ENCODE measurements at regions of chr7 and their contacts with region 1.

Region 1: DNA sequence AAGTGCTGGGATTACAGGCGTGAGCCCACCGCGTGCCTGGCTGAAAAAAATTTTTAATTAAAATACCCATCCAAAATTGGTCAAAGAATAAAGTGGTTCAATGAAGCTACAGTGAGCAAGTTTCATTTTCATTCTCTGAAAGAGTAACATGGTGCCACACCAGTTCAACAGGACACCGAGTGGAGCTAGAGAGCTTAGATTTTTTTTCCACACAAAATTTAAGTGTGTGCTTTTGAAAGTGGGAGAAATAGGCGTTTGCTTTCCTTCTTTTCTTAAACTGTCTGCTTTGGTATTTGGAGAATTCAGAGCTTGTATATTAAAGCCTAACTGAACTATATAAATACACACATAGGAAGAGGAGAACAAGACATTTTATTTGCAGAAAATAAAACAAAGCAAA is 43.4 kb downstream of the BPGM start:
- H3K4me3 ChIP-seq: no peak overlapping the region
- H3K27ac ChIP-seq: no peak overlapping the region
- H3K4me1 ChIP-seq: no peaks in the 10 kb centered on the region
- CTCF ChIP-seq: 0 out of 2 replicates have a peak, but pooled peaks have one; percentile 26

Region 2: GRCh38 chr7:134701272-134701671 is 11.3 kb after region 1 on chr7:
- CTCF ChIA-PET with region 1: interaction called, 13 read pairs
- POLR2A ChIA-PET with region 1: no interaction called
- H3K4me3 ChIP-seq: no peak overlapping the region
- H3K27ac ChIP-seq: no peak overlapping the region
- H3K4me1 ChIP-seq: no peaks in the 10 kb centered on the region
- CTCF ChIP-seq: 0 out of 2 replicates have a peak, but pooled peaks have one; percentile 14

Region 3: DNA sequence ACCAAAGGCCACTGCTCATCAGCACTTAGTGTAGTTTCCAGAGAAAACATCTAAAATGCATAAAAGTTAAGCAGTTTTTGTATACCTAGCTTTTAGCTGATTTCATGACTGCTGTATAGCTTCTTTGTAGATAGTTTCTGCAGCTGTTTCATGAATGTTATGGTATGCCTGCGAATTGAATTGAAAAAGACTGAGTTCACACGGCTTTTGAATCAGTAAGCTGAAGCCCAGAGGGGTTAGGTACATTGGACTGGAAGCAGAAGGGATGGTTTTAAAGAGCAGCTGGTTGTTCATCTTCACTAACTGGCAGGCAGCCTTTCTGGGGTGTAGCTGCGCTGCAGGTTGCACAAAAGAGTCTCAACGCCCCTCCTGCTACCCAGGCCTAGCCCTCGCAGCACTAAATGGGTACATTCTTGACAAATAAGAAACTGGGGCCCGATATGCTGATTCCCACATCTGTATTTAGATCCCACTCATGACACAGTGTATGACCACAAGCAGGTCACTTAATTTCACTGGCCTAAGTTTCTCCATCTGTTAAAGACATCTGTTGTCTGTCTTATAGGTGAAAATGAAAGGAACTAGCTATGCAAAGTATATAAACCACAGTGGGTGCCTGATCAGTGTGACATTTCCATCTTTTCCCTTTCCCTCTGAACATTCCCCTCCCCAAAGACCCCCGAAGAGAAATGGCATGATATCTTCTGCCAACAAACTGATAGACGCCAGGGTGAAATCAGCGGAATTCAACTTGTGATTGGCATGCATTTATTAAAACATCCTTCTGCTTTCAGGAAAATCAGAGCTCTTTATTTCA is 210.4 kb after region 1 on chr7:
- CTCF ChIA-PET with region 1: no interaction called
- POLR2A ChIA-PET with region 1: no interaction called
- H3K4me3 ChIP-seq: no peak overlapping the region
- H3K27ac ChIP-seq: no peak overlapping the region
- H3K4me1 ChIP-seq: no peaks in the 10 kb centered on the region
- CTCF ChIP-seq: no peak

Region 4: DNA sequence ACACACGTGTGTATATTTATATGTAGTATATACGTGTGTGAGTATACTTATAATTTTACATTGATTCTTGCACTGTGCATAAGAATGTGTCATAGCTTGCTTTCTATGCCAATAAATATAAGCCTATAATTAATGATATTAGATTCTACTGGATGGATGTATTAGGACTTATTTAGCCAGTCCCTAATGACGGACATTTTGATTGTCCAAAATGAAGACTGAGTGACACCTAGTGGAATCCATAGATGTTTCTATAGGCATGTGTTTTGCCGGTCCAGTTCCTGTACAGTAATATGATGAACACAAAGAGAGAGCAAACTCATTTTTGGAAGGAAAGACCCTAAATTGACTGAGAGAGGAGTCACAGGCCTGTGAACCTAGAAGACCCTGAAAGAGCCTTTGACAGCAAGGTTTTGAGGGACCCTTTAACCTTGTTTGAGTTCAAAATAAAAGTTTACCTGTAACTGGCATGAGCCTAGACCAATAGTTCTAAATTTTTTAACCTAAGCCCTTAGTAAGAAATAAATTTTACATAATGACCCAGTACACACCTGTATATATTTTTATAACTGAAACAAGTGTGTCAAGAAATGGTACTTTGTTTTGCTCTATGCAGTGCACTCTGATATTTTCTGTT is 253.9 kb after region 1 on chr7:
- CTCF ChIA-PET with region 1: interaction called, 36 read pairs
- POLR2A ChIA-PET with region 1: no interaction called
- H3K4me3 ChIP-seq: no peak overlapping the region
- H3K27ac ChIP-seq: no peak overlapping the region
- H3K4me1 ChIP-seq: no peaks in the 10 kb centered on the region
- CTCF ChIP-seq: no peak

Region 5: DNA sequence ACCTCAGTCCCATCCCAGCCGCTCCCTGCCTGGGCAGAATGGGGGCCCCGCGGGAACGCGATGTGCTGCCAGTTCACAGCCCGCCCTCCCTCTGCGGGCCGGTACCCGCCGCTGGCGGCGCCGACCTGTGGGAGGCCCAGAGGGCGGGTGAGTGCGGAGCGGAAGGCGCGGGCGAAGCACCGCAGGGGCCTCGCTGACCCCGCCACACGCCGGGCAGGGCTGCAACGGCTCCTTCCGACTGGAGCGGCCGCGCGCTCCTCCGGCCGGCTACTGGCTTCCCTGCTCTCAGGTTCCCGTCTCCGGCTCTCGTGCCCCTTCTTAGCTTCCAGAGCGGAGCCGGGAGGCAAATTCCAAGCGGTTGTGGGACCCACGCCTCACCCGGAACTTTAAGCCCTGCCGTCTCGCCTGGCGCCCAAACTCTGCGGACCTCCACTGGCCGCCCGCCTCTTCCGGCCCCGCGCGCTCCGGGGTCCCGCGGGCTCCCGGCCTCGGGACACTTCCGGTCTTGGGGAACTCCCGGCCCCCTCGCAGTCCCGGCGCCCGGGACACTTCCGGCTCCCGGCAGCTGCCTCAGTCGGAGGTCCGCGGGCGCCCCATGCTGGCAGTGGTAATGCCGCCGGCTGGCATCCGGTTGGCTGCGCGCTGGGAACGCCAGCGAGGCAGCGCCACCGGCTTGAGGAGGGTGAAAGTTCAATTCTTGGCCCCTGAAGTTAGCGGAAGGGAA is 480.4 kb after region 1 on chr7 and contains the start of gene CYREN:
- CTCF ChIA-PET with region 1: interaction called, 10 read pairs
- POLR2A ChIA-PET with region 1: no interaction called
- H3K4me3 ChIP-seq: peak within 1 kb of the TSS; percentile 83
- H3K27ac ChIP-seq: peak within 1 kb of the TSS; percentile 89
- H3K4me1 ChIP-seq: no peaks in the 10 kb centered on the region
- CTCF ChIP-seq: peak; percentile 91

Region 6: GRCh38 chr7:135335628-135336139 is 645.7 kb after region 1 on chr7:
- CTCF ChIA-PET with region 1: interaction called, 10 read pairs
- POLR2A ChIA-PET with region 1: no interaction called
- H3K4me3 ChIP-seq: no peak overlapping the region
- H3K27ac ChIP-seq: no peak overlapping the region
- H3K4me1 ChIP-seq: no peaks in the 10 kb centered on the region
- CTCF ChIP-seq: peak; percentile 84

Measured in HEK293 (cell line).